ENCODE measurements at regions of chr7 and their contacts with region 1.

Region 1: DNA sequence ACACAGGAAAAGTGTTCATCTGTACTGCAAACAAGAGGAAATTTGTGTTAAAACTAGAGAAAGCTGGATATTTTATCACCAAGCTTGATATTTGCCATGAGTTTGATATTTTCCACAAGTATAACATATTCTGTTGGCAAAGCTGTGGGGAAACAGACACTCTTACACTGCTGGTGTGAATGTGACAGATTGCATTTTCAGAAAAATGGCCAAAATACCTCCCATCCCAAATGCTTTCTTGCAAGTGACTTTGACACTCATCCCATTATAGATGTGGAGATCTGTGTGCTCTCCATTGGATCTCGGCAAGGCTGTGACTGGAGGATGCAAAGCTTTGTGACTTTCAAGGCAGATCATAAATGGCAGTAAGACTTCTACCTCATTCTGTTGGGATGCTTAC is 30.5 kb downstream of the ZNF713 start:
- DNase-seq: no peak
- ATAC-seq: no peak
- H3K4me3 ChIP-seq: no peak overlapping the region
- H3K4me3 Mint-ChIP-seq: no peak overlapping the region
- H3K27ac ChIP-seq: no peak overlapping the region
- H3K27ac Mint-ChIP-seq: no peak overlapping the region
- H3K4me1 ChIP-seq: no peaks in the 10 kb centered on the region
- H3K4me1 Mint-ChIP-seq: no peaks in the 10 kb centered on the region
- H3K27me3 ChIP-seq: no peaks in the 10 kb centered on the region
- H3K27me3 Mint-ChIP-seq: no peaks in the 10 kb centered on the region

Region 2: DNA sequence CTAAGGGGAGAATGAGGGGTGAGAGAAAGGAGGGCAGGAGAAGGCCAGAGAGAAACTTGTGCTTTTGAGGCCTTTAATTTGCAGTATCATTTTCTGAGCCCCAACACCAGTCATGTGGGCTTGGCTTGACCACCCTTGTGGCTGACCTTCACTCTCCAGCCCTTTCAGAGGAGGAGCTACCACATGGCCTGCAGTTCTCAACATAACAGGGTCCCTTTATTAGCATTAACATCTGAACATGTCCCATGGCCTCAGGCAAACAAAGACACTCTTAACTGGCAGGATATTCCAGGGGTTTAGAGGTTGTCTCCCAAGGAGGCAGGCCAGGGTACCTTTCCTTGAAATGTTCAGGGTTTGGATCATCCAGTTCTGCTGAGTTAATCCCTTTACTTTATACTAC is 23.8 kb before region 1 on chr7:
- CTCF ChIA-PET with region 1: no interaction called
- POLR2A ChIA-PET with region 1: no interaction called
- DNase-seq: no peak
- ATAC-seq: no peak
- H3K4me3 ChIP-seq: no peak overlapping the region
- H3K4me3 Mint-ChIP-seq: no peak overlapping the region
- H3K27ac ChIP-seq: no peak overlapping the region
- H3K27ac Mint-ChIP-seq: no peak overlapping the region
- H3K4me1 ChIP-seq: no peaks in the 10 kb centered on the region
- H3K4me1 Mint-ChIP-seq: no peaks in the 10 kb centered on the region
- H3K27me3 ChIP-seq: no peaks in the 10 kb centered on the region
- H3K27me3 Mint-ChIP-seq: no peaks in the 10 kb centered on the region

Region 3: DNA sequence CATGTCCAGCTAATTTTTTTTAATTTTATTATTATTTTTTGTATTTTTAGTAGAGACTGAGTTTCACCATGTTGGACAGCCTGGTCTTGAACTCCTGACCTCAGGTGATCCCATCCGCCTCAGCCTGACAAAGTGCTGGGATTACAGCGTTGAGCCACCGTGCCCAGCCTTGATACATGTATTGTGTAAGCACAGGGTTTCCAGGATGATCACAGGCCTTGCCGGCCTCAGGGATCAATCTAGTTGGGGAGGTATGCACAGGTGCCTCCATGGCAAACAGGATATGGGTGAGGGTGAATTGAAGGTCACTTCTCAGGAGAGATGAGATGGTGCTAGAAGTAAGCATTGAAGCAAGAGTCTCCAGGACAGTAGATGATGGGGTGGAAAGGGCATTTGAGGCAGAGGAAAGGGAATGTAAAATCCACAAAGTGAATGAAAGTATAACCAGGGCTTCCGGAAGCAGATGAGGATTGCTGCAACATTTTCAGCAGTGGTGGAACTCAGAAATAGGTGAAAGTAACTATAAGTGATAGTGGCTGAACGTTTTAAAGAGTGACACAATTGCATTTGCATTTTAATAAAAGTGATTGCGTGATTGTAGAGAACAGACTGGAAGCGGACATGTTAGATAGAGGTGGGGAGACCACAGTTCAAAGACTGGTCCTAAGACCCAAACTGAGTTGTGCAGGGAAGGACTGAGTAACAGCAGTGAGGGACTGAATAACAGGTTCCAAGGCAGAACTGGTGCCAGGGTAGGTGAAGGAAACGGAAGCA is 39.6 kb after region 1 on chr7:
- CTCF ChIA-PET with region 1: no interaction called
- POLR2A ChIA-PET with region 1: interaction called in 1 of 2 experiments, 15 read pairs
- DNase-seq: no peak
- ATAC-seq: no peak
- H3K4me3 ChIP-seq: no peak overlapping the region
- H3K4me3 Mint-ChIP-seq: no peak overlapping the region
- H3K27ac ChIP-seq: no peak overlapping the region
- H3K27ac Mint-ChIP-seq: no peak overlapping the region
- H3K4me1 ChIP-seq: peaks cover under 1 to 9% of the 10 kb centered on the region in 2 experiments
- H3K4me1 Mint-ChIP-seq: peaks cover 18 to 24% (median 22%) of the 10 kb centered on the region in 3 donors
- H3K27me3 ChIP-seq: no peaks in the 10 kb centered on the region
- H3K27me3 Mint-ChIP-seq: no peaks in the 10 kb centered on the region

Region 4: DNA sequence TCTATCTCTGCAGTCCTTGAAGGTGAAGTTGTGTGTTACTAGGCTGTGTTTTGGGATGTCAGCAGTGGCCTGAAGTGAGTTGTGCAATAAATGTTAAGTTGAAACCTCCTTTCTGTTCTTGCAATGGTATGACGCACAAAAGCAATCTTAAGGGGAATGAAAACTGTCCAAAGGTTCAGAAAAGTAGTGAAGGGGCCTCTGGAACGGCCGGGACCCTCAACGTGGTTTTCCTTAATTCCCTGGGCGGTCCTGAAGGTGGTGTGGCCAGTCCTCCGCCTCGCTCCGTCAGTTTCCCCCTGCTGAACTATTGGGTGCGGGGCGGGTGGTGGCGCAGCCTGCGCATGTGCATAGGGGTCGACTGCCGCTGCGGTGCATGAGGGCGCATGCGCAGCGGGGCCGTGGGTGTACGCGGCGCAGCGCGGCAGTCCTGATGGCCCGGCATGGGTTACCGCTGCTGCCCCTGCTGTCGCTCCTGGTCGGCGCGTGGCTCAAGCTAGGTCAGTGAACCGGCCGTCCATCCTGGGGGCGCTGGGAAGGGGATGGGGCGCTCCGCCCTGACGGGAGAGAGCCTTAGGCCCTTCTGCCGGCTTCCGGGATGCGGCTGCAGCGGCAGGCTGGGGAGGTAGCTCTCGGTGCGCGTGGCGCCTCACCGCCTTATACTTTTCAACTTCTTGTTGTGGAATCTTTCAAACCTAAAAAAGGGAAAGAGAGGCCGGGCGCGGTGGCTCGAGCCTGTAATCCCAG is 146.3 kb after region 1 on chr7 and contains the start of gene SUMF2:
- CTCF ChIA-PET with region 1: no interaction called
- POLR2A ChIA-PET with region 1: no interaction called
- DNase-seq: peak; percentile 75 to 95 (median 87)
- ATAC-seq: peak; percentile 89 to 91 (median 90)
- H3K4me3 ChIP-seq: peak within 1 kb of the TSS; percentile 76 to 98
- H3K4me3 Mint-ChIP-seq: peak within 1 kb of the TSS; percentile 92 to 95 (median 92)
- H3K27ac ChIP-seq: peak within 1 kb of the TSS; percentile 84
- H3K27ac Mint-ChIP-seq: peak within 1 kb of the TSS; percentile 94 to 96
- H3K4me1 ChIP-seq: peaks cover 7 to 21% of the 10 kb centered on the region in 2 experiments
- H3K4me1 Mint-ChIP-seq: peaks cover 28 to 31% (median 29%) of the 10 kb centered on the region in 3 donors
- H3K27me3 ChIP-seq: no peaks in the 10 kb centered on the region
- H3K27me3 Mint-ChIP-seq: no peaks in the 10 kb centered on the region
- total RNA-seq, gene SUMF2: 127 to 182 (median 174) TPM

Measured in T-cell (primary cell).